ENCODE measurements at regions of chr18 and their contacts with region 1.

Region 1: GRCh38 chr18:6482198-6482977 is 67.7 kb upstream of the L3MBTL4 start:
- DNase-seq: peak; percentile 50 to 86 (median 78)
- ATAC-seq: peak; percentile 86 to 99 (median 97)
- H3K4me3 ChIP-seq: no peak overlapping the region
- H3K27ac ChIP-seq: no peak overlapping the region
- H3K4me1 ChIP-seq: peaks cover 0 to 18% (median 0%) of the 10 kb centered on the region in 12 donors
- H3K27me3 ChIP-seq: no peaks in the 10 kb centered on the region
- CTCF ChIP-seq: peak; percentile 58 to 96 (median 82)
- POLR2A ChIP-seq: no peak

Region 2: GRCh38 chr18:5600378-5601071 is 881.9 kb before region 1 on chr18:
- intact Hi-C with region 1: loop called in 1 of 10 experiments (anchors 5 kb)
- DNase-seq: no peak
- ATAC-seq: no peak
- H3K4me3 ChIP-seq: no peak overlapping the region
- H3K27ac ChIP-seq: no peak overlapping the region
- H3K4me1 ChIP-seq: peaks cover 0 to 4% (median 0%) of the 10 kb centered on the region in 12 donors
- H3K27me3 ChIP-seq: no peaks in the 10 kb centered on the region
- CTCF ChIP-seq: peak in 8 of 12 donors; percentile 19 to 56 (median 48)
- POLR2A ChIP-seq: no peak

Region 3: GRCh38 chr18:5868218-5869115 is 613.9 kb before region 1 on chr18:
- intact Hi-C with region 1: loop called in 2 of 10 experiments (anchors 1 to 5 kb)
- DNase-seq: peak in 4 of 5 donors; percentile 55 to 65 (median 58)
- ATAC-seq: peak; percentile 61 to 93 (median 88)
- H3K4me3 ChIP-seq: no peak overlapping the region
- H3K27ac ChIP-seq: no peak overlapping the region
- H3K4me1 ChIP-seq: no peaks in the 10 kb centered on the region
- H3K27me3 ChIP-seq: peaks cover 0 to 20% (median 0%) of the 10 kb centered on the region in 9 donors
- CTCF ChIP-seq: peak; percentile 58 to 82 (median 76)
- POLR2A ChIP-seq: no peak

Region 4: DNA sequence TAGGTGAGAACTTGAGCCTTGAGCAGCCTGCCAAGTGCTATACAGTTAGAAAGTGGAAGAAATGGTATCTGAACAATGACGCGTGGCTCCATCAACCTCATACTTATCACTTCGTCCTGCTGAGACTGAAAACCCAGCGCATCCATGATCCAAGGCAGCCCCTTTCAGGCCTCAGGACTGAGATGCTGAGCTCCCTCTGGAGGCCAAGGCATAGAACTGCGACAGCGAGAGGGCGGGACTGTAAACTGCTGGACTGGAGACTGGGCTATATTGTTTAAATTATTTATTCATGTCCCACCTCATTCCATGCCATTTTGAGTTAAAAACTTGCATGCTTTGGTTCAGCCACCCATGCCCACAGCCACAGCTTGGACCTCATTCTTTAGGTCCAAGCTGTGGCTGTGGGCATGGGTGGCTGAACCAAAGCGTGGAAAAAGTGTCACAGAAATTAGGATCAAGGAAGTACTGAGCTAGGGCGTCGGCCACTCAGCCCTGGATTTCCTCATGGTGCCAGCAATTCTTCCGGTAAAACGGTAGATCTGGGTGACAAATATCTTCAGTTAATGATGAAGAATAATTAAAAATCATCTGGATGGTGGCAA is 263.2 kb before region 1 on chr18:
- intact Hi-C with region 1: loop called in 1 of 10 experiments (anchors 10 kb)
- DNase-seq: peak in 3 of 5 donors; percentile 15 to 40 (median 37)
- ATAC-seq: peak in 3 of 4 donors; percentile 62 to 77 (median 65)
- H3K4me3 ChIP-seq: no peak overlapping the region
- H3K27ac ChIP-seq: no peak overlapping the region
- H3K4me1 ChIP-seq: peaks cover 0 to 3% (median 0%) of the 10 kb centered on the region in 12 donors
- H3K27me3 ChIP-seq: no peaks in the 10 kb centered on the region
- CTCF ChIP-seq: peak; percentile 53 to 73 (median 62)
- POLR2A ChIP-seq: no peak

Region 5: DNA sequence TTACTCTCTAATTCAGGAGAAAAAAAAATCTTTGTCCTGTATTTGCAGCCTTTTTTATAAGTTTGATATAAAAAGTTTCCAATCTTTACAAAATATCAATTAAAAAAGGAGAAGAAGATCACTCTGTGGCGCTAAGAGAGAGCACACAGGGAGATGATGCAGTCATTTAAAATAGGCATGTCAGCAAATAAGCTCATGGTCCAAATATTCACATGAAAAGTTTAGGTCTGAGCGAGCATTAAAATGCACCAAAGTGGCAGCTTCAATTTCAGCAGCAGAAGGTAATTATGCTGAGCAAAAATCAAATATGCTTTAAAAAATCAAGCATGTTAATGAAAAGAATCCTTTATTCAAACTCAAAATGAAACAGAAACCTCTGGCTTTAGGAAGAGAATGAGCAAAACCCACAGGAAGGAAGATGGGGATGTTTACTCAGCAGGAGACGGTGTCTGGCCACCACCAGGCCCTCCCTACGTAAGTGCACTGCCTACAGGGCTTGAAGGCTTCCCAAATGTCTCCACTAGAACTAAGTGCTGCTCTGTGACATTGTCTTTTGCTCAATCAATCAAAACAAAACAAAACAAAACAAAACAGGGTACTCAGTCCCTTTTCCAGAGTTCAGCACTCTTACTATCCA is 188.1 kb before region 1 on chr18:
- intact Hi-C with region 1: loop called in 1 of 10 experiments (anchors 10 kb)
- DNase-seq: peak in 2 of 5 donors; percentile 24 to 49
- ATAC-seq: peak in 3 of 4 donors; percentile 65 to 91 (median 70)
- H3K4me3 ChIP-seq: peak overlapping the region in 6 of 12 donors; percentile 3 to 33 (median 20)
- H3K27ac ChIP-seq: peak overlapping the region in 3 of 12 donors; percentile 4 to 70 (median 35)
- H3K4me1 ChIP-seq: peaks cover 0 to 14% (median 0%) of the 10 kb centered on the region in 12 donors
- H3K27me3 ChIP-seq: no peaks in the 10 kb centered on the region
- CTCF ChIP-seq: no peak
- POLR2A ChIP-seq: no peak

Region 6: DNA sequence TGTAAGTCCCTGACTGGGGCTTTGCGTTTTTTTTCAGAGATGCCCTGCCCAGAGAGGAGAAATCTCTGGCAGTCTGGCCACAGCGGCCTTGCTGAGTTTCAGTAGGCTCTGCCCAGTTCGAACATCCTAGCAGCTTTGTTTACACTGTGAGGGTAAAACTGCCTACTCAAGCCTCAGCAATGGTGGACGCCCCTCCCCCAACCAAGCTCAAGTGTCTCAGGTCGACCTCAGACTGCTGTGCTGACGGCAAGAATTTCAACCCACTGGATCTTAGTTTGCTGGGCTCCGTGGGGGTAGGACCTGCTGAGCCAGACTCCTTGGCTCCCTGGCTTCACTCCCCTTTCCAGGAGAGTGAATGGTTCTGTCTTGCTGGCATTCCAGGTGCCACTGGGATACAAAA is 99.4 kb before region 1 on chr18:
- intact Hi-C with region 1: no loop called
- DNase-seq: no peak
- ATAC-seq: no peak
- H3K4me3 ChIP-seq: no peak overlapping the region
- H3K27ac ChIP-seq: no peak overlapping the region
- H3K4me1 ChIP-seq: no peaks in the 10 kb centered on the region
- H3K27me3 ChIP-seq: no peaks in the 10 kb centered on the region
- CTCF ChIP-seq: no peak
- POLR2A ChIP-seq: no peak

Region 7: DNA sequence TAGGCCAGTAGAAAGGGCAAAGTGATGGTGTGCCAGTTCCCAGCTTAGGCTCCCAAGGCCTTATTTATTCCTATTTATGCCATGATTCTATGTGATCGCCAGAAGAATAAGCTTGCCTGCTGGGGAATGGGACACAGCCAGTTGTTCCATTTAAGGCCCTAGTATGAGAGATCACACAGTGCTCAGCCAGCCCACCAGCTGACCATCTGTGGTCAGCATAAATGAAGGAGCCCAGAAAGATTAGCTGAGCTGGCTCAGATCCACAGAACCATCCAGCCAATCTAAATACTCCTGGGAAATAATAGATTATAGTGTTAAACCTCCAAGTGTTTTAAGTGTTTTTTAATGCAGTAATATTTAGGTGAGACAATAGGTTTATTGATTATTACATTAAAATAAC is 55.1 kb before region 1 on chr18:
- intact Hi-C with region 1: loop called in 1 of 10 experiments (anchors 10 kb)
- DNase-seq: no peak
- ATAC-seq: no peak
- H3K4me3 ChIP-seq: no peak overlapping the region
- H3K27ac ChIP-seq: no peak overlapping the region
- H3K4me1 ChIP-seq: no peaks in the 10 kb centered on the region
- H3K27me3 ChIP-seq: no peaks in the 10 kb centered on the region
- CTCF ChIP-seq: no peak
- POLR2A ChIP-seq: no peak

Region 8: DNA sequence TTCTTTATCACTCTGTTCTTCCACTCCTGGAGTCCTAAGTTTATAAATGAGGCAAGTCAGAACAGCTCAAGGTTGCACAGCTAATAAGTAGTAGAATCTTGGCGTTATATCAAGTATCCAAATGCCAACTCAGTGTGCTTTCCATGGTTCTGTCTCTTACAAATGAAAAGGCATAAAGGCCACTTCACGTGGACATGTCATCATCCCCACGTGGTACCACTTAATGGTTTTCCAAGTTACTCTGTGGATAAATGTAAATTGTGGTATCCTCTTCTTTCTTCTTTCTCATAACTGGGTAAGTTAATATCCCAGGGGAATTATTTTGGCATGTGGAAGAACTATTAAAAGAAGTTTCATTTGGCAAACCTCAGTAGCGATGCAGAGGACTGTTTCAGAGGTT is 63.8 kb after region 1 on chr18:
- intact Hi-C with region 1: no loop called
- DNase-seq: no peak
- ATAC-seq: no peak
- H3K4me3 ChIP-seq: no peak overlapping the region
- H3K27ac ChIP-seq: no peak overlapping the region
- H3K4me1 ChIP-seq: no peaks in the 10 kb centered on the region
- H3K27me3 ChIP-seq: no peaks in the 10 kb centered on the region
- CTCF ChIP-seq: no peak
- POLR2A ChIP-seq: no peak